ENCODE measurements at regions of chr5 and their contacts with region 1.

Region 1: GRCh38 chr5:9507974-9508373 is 37.9 kb downstream of the SEMA5A start:
- DNase-seq: no peak
- H3K4me3 ChIP-seq: no peak overlapping the region
- H3K27ac ChIP-seq: no peak overlapping the region
- H3K4me1 ChIP-seq: no peaks in the 10 kb centered on the region
- H3K27me3 ChIP-seq: no peaks in the 10 kb centered on the region
- CTCF ChIP-seq: no peak
- EP300 ChIP-seq: no peak
- POLR2A ChIP-seq: no peak

Region 2: GRCh38 chr5:9233712-9234111 is 274.3 kb before region 1 on chr5:
- intact Hi-C with region 1: no loop called
- DNase-seq: no peak
- H3K4me3 ChIP-seq: no peak overlapping the region
- H3K27ac ChIP-seq: no peak overlapping the region
- H3K4me1 ChIP-seq: peaks cover 9% of the 10 kb centered on the region
- H3K27me3 ChIP-seq: no peaks in the 10 kb centered on the region
- CTCF ChIP-seq: no peak
- EP300 ChIP-seq: no peak
- POLR2A ChIP-seq: no peak

Region 3: GRCh38 chr5:9324348-9325077 is 183.5 kb before region 1 on chr5:
- intact Hi-C with region 1: no loop called
- DNase-seq: no peak
- H3K4me3 ChIP-seq: no peak overlapping the region
- H3K27ac ChIP-seq: no peak overlapping the region
- H3K4me1 ChIP-seq: no peaks in the 10 kb centered on the region
- H3K27me3 ChIP-seq: no peaks in the 10 kb centered on the region
- CTCF ChIP-seq: no peak
- EP300 ChIP-seq: no peak
- POLR2A ChIP-seq: no peak

Region 4: DNA sequence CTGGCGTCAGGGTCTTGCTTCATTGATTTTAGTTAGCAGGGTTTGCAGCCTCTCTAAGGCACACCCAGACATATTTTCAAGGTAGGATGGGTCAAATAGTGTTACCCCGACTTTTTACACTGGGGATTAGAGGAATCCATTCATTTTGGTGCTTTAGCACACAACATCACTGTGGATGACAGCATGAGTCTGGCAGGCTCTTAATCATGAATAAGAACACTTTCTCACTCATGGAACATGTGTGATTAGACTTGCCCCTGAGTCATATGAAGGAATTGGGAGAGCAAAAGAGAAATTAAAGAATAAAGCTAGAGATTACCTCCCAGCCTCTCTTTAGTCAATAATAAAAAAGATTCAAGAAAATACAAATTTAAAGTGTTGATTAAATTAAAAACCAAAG is 137.7 kb before region 1 on chr5:
- intact Hi-C with region 1: loop called in 1 of 4 experiments (anchors 10 kb)
- DNase-seq: no peak
- H3K4me3 ChIP-seq: no peak overlapping the region
- H3K27ac ChIP-seq: no peak overlapping the region
- H3K4me1 ChIP-seq: no peaks in the 10 kb centered on the region
- H3K27me3 ChIP-seq: no peaks in the 10 kb centered on the region
- CTCF ChIP-seq: no peak
- EP300 ChIP-seq: no peak
- POLR2A ChIP-seq: no peak

Region 5: GRCh38 chr5:9479361-9479760 is 28.6 kb before region 1 on chr5:
- intact Hi-C with region 1: no loop called
- DNase-seq: no peak
- H3K4me3 ChIP-seq: no peak overlapping the region
- H3K27ac ChIP-seq: no peak overlapping the region
- H3K4me1 ChIP-seq: no peaks in the 10 kb centered on the region
- H3K27me3 ChIP-seq: no peaks in the 10 kb centered on the region
- CTCF ChIP-seq: no peak
- EP300 ChIP-seq: no peak
- POLR2A ChIP-seq: no peak

Region 6: GRCh38 chr5:9861666-9862256 is 353.8 kb after region 1 on chr5:
- intact Hi-C with region 1: no loop called
- DNase-seq: no peak
- H3K4me3 ChIP-seq: no peak overlapping the region
- H3K27ac ChIP-seq: no peak overlapping the region
- H3K4me1 ChIP-seq: no peaks in the 10 kb centered on the region
- H3K27me3 ChIP-seq: no peaks in the 10 kb centered on the region
- CTCF ChIP-seq: no peak
- EP300 ChIP-seq: no peak
- POLR2A ChIP-seq: no peak

Measured in ovary (tissue), 10 donors.